Sigmoid colon (tissue), 7 donors: ENCODE measurements at regions of chr14 and their contacts with region 1.

Region 1: DNA sequence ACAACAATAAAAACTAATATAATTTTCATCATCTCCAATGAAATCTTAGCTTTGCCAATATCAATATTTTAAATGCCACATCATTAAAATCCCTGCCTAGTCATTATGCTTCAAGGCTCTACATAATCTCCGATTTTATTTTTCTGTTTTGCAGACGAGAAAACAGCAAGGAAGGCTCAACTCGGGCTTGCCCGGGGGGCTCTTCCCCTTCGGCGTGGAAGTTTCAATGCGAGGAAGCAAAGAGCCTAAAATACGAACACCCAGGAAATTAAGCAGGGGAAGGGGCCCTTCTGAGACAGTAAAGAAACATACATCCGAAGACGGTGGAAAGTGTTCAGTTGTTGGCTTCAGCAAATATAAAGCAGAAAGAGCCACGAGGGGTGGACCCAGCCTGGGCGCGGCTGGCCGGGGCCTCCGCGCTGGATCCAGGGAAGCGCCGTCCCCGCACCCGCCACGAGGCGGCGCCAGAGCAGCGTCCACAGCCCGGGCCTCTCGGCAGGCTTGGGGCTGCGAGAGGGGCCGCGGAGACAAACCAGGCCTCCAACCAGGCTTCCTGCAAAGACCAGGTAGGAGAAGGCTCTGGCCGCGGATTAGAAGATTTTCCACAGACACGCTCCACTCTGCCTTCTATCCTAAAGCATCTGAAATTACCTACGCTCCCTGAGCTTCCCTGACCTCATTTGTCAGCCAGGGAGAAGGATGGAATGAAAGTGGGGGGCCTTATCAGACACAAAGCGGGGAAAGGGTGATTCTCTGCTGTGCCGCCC is 77.2 kb downstream of the SERPINA3 start:
- DNase-seq: peak; percentile 75
- H3K4me3 ChIP-seq: no peak overlapping the region
- H3K27ac ChIP-seq: no peak overlapping the region
- H3K4me1 ChIP-seq: peaks cover 0 to 10% (median 8%) of the 10 kb centered on the region in 4 donors
- H3K27me3 ChIP-seq: no peaks in the 10 kb centered on the region
- CTCF ChIP-seq: peak; percentile 86 to 98 (median 93)
- EP300 ChIP-seq: no peak
- POLR2A ChIP-seq: no peak

Region 2: GRCh38 chr14:95431199-95432143 is 742.1 kb after region 1 on chr14:
- intact Hi-C with region 1: loop called (anchors 2 kb)
- DNase-seq: no peak
- H3K4me3 ChIP-seq: no peak overlapping the region
- H3K27ac ChIP-seq: peak overlapping the region in 2 of 4 donors; percentile 47 to 57
- H3K4me1 ChIP-seq: peaks cover 0 to 11% (median 8%) of the 10 kb centered on the region in 4 donors
- H3K27me3 ChIP-seq: no peaks in the 10 kb centered on the region
- CTCF ChIP-seq: peak in 3 of 4 experiments; percentile 20 to 28 (median 21)
- EP300 ChIP-seq: no peak
- POLR2A ChIP-seq: no peak